ENCODE measurements at regions of chr3 and their contacts with region 1.

Region 1: GRCh38 chr3:128426128-128426921 is 40.4 kb downstream of the DNAJB8 start:
- DNase-seq: peak; percentile 91
- H3K4me3 Mint-ChIP-seq: no peak overlapping the region
- H3K27ac Mint-ChIP-seq: no peak overlapping the region
- H3K4me1 Mint-ChIP-seq: no peaks in the 10 kb centered on the region
- H3K27me3 Mint-ChIP-seq: peaks cover 15% of the 10 kb centered on the region

Region 2: DNA sequence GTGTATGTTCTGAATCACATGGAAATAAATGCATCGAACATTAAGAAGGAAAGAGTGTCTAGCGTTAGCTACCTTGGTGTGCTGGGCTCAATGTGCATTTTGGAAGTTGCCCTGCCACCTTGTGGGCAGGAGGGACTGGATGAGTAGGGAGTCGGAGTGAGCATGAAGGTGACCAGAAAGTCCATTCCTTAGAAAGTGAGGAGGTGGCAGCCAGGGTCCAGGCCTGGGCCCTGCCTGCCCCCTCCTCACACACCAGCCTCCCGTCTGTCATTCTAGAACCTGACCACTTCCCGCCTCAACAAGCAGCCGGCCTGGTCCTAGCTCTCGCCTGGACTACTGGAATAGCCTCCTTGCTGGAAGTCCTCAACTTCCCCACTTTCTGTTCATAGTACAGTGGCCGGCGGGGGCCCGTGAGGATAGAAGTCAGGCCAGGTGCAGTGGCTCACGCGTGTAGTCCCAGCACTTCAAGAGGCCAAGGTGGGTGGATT is 76.9 kb after region 1 on chr3:
- intact Hi-C with region 1: no loop called
- DNase-seq: no peak
- H3K4me3 Mint-ChIP-seq: no peak overlapping the region
- H3K27ac Mint-ChIP-seq: no peak overlapping the region
- H3K4me1 Mint-ChIP-seq: no peaks in the 10 kb centered on the region
- H3K27me3 Mint-ChIP-seq: peaks cover 30% of the 10 kb centered on the region

Region 3: DNA sequence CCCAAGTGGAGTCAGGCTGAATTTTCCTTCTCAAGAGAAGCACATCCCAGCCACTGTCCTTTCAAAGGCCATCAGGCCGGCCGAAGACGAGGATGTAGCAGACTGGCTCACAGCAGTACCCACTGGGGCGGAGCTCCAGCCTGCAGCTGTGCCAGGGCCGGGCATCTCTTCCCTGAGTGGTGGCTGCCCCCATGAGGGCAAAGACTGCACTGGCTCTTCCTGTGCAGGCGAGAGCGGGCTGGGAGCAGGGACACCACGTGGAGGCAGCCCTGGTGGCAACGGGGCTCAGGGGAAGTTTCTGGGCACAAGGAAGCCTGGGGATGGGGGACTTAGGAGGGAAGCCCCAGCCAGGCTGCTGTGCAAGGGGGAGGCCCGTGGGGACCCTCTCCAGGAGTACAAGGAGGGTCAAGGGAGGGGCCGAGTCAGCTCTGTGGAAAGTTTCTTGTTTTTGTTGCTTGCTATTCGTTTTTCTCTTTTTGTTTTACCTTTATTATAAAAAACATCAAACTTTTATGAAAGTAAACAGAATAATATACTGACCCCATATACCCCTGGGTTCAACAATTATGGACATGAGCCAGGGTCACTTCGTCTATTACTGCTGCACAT is 158.2 kb after region 1 on chr3:
- intact Hi-C with region 1: loop called (anchors 2 kb)
- DNase-seq: peak; percentile 75
- H3K4me3 Mint-ChIP-seq: no peak overlapping the region
- H3K27ac Mint-ChIP-seq: no peak overlapping the region
- H3K4me1 Mint-ChIP-seq: peaks cover 4% of the 10 kb centered on the region
- H3K27me3 Mint-ChIP-seq: peaks cover 4% of the 10 kb centered on the region